Naive thymus-derived CD4-positive, alpha-beta T cell (primary cell): ENCODE measurements at regions of chr22 and their contacts with region 1.

Region 1: DNA sequence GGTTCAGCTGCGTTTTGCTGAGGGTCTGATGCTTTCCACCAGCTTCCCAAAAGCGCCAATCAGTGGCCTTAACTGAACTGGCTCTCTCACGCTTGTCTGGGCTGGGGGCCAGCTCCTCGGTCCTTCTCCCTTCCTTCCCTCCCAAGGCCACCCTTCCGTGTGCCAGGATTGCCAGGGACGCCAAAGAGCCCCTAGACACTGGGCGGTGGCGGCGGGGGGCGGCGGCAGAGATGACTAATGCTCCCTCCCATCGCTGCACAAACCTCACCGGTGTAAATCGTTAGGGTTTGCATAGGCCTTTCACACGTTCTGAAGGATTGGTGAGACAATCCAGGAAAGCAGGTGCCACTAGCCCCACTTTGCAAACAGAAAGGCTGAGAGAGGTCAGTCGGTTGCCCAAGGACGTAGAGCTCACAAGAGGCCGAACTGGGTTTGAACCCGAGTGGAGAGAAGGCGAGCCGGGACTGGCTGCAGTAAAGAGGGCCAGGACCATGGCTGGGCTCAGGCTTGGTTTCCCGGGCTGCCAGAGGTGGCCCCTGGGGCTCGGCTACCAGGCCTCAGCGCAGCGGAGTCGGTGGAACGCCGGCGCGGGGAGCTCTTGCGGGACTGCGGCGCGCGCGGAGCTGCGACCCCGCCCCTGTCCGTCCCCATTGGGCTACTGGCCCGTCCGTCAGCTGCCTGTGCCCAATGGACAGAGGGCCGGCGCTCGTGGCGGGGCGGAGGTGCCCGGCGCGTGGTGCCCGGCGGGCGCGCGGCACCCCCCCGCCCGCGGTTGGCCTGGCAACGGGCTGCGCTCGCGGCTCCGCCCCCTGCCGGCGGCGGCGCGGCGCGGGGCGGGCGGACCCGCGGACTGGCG is 589 bp upstream of the GNAZ start:
- DNase-seq: peak; percentile 82 to 92 (median 87)
- ATAC-seq: peak; percentile 99
- H3K4me3 ChIP-seq: peak overlapping the region; percentile 75
- H3K4me3 Mint-ChIP-seq: peak overlapping the region; percentile 79 to 92 (median 85)
- H3K27ac ChIP-seq: peak overlapping the region; percentile 40
- H3K27ac Mint-ChIP-seq: peak overlapping the region in 8 of 9 donors; percentile 29 to 90 (median 54)
- H3K4me1 ChIP-seq: peaks cover 9 to 10% of the 10 kb centered on the region in 2 donors
- H3K4me1 Mint-ChIP-seq: peaks cover 5 to 25% (median 16%) of the 10 kb centered on the region in 7 donors
- H3K27me3 ChIP-seq: no peaks in the 10 kb centered on the region
- H3K27me3 Mint-ChIP-seq: peaks cover 0 to 45% (median 9%) of the 10 kb centered on the region in 5 donors

Region 2: GRCh38 chr22:23128269-23129108 is 58.8 kb after region 1 on chr22:
- CTCF ChIA-PET with region 1: no interaction called
- POLR2A ChIA-PET with region 1: no interaction called
- intact Hi-C with region 1: loop called in 1 of 2 experiments (anchors 5 kb)
- DNase-seq: peak; percentile 46 to 74 (median 68)
- ATAC-seq: peak; percentile 92
- H3K4me3 ChIP-seq: no peak overlapping the region
- H3K4me3 Mint-ChIP-seq: no peak overlapping the region
- H3K27ac ChIP-seq: no peak overlapping the region
- H3K27ac Mint-ChIP-seq: peak overlapping the region in 1 of 9 donors; percentile 82
- H3K4me1 ChIP-seq: no peaks in the 10 kb centered on the region
- H3K4me1 Mint-ChIP-seq: peaks cover 0 to 5% (median 0%) of the 10 kb centered on the region in 7 donors
- H3K27me3 ChIP-seq: no peaks in the 10 kb centered on the region
- H3K27me3 Mint-ChIP-seq: peaks cover 0 to 6% (median 0%) of the 10 kb centered on the region in 5 donors

Region 3: DNA sequence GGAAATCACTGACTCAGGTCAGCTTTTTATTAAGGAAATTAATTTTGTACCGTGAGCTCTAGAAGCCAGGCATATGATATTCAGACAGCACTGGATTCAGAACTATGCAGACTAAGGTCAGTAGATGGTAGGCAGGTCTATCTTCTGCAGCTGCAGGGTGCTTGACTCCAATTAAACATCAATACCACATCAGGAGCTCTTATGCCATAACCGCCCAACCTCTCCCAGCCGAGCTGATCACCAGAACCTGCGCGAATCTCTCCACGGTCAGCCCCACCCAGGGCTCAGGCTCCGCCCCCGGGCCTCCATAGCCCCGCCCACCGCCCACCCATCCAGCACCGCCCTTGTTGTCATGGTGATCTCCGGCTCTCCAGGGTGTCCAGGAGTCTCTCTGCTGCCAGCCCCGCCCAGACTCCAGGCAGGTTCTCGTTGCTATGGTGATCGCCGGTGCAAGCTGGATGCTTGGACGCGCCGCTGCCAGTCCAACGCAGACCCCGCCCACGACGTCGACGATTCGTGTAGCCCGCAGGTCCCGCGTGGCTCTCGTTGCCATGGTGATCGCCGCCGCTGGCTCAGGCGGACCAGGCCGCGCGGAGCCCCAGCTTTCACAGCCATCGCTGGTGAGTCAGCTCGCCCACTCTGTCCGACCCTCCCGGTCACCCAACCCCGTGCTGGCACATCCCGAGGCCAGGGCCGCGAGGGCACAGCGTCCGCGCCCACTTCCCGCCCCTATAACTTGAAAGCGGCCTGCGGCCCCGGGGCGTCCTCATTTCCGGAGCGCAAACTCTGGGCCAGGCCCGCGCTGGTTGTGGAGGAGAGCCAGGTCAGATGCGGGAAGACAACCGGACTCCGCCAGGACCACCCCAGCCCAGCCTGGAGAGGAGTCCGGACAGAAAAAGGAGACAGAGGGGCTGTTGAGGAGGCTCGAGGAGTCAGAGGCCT is 75.5 kb after region 1 on chr22 and contains the start of gene RAB36:
- CTCF ChIA-PET with region 1: no interaction called
- POLR2A ChIA-PET with region 1: no interaction called
- intact Hi-C with region 1: loop called in 1 of 2 experiments (anchors 1 kb)
- DNase-seq: peak; percentile 77 to 93 (median 81)
- ATAC-seq: peak; percentile 78
- H3K4me3 ChIP-seq: peak within 1 kb of the TSS; percentile 25
- H3K4me3 Mint-ChIP-seq: peak within 1 kb of the TSS; percentile 72 to 84 (median 82)
- H3K27ac ChIP-seq: peak within 1 kb of the TSS; percentile 78
- H3K27ac Mint-ChIP-seq: peak within 1 kb of the TSS; percentile 79 to 96 (median 93)
- H3K4me1 ChIP-seq: peaks cover 38 to 45% of the 10 kb centered on the region in 2 donors
- H3K4me1 Mint-ChIP-seq: peaks cover 27 to 60% (median 49%) of the 10 kb centered on the region in 7 donors
- H3K27me3 ChIP-seq: no peaks in the 10 kb centered on the region
- H3K27me3 Mint-ChIP-seq: peaks cover 0 to 20% (median 0%) of the 10 kb centered on the region in 5 donors
- total RNA-seq, gene RAB36: 0.10 to 1.2 (median 0.38) TPM